ENCODE measurements at regions of chr18 and their contacts with region 1.

Region 1: DNA sequence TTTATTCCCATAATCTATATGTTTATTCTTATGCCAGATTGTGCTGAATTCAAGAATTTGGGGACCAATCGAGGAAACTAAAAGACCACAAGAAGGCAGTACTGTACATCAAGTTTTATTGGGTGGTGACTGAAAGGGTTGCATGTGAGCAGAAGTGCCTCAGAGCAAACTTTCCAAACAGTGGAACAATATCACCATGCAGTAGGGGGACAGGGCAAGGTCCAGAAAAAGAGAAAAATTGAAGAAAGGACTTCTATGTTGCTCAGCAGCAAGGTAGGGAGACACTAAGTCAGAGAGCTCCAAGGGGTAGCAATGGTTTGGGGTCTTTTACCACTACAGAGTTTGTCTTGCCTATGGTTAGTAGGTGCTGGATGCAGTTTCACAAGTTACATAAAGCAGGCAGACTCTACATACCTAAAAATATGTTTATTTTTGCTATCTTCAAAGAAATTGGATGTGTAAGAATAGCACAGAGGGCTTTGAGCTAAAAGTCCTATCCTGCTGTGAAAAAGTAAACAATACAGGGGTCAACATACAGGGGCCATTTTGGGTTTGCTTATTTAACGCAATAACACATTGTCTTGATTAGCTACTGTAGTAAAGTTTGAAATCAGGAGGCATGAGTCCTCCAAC is 43.8 kb upstream of the ZBTB14 start:
- DNase-seq: no peak
- H3K4me3 Mint-ChIP-seq: no peak overlapping the region
- H3K27ac Mint-ChIP-seq: no peak overlapping the region
- H3K4me1 Mint-ChIP-seq: no peaks in the 10 kb centered on the region
- H3K27me3 Mint-ChIP-seq: no peaks in the 10 kb centered on the region

Region 2: GRCh38 chr18:5354916-5355315 is 15.6 kb after region 1 on chr18:
- intact Hi-C with region 1: loop called (anchors 2 kb)
- DNase-seq: no peak
- H3K4me3 Mint-ChIP-seq: no peak overlapping the region
- H3K27ac Mint-ChIP-seq: no peak overlapping the region
- H3K4me1 Mint-ChIP-seq: no peaks in the 10 kb centered on the region
- H3K27me3 Mint-ChIP-seq: no peaks in the 10 kb centered on the region

Region 3: DNA sequence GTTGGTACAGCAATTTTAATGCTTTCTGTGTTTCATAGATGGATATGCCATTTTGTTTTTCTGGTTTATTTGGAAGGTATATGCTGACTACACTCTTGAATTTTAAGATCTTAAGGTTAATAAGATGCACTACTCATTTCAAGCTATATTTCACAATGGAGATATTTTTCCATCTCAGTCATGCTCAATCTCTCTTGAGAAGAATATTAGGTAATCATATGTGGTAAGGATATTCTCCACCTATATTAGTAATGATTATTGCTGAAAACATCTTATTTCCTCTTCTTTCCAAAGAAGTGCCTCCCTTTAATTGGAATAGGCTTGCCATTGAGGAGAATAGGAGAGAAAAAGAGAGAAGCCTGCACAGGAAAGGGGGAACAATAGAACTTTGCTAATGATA is 164.4 kb after region 1 on chr18:
- intact Hi-C with region 1: no loop called
- DNase-seq: no peak
- H3K4me3 Mint-ChIP-seq: no peak overlapping the region
- H3K27ac Mint-ChIP-seq: no peak overlapping the region
- H3K4me1 Mint-ChIP-seq: no peaks in the 10 kb centered on the region
- H3K27me3 Mint-ChIP-seq: no peaks in the 10 kb centered on the region

Measured in activated T-helper 2 cell treated with anti-CD3 and anti-CD28 coated beads, Interferon-gamma antibody, Interleukin-2, Interleukin-4, amounts not matched to agents 10 μg/mL and 5 μg/mL and 100 μg/mL, durations not matched to agents 14 hours and 24 hours and 36 hours (primary cell).